CD8-positive, alpha-beta T cell (primary cell): ENCODE measurements at regions of chr2 and their contacts with region 1.

Region 1: GRCh38 chr2:109529532-109530449 is 84.0 kb downstream of the SEPTIN10 start:
- DNase-seq: peak in 1 of 9 experiments; percentile 25
- ATAC-seq: no peak
- H3K4me3 ChIP-seq: no peak overlapping the region
- H3K4me3 Mint-ChIP-seq: no peak overlapping the region
- H3K27ac ChIP-seq: no peak overlapping the region
- H3K27ac Mint-ChIP-seq: no peak overlapping the region
- H3K4me1 ChIP-seq: no peaks in the 10 kb centered on the region
- H3K4me1 Mint-ChIP-seq: no peaks in the 10 kb centered on the region
- H3K27me3 ChIP-seq: no peaks in the 10 kb centered on the region
- H3K27me3 Mint-ChIP-seq: no peaks in the 10 kb centered on the region
- CTCF ChIP-seq: no peak

Region 2: DNA sequence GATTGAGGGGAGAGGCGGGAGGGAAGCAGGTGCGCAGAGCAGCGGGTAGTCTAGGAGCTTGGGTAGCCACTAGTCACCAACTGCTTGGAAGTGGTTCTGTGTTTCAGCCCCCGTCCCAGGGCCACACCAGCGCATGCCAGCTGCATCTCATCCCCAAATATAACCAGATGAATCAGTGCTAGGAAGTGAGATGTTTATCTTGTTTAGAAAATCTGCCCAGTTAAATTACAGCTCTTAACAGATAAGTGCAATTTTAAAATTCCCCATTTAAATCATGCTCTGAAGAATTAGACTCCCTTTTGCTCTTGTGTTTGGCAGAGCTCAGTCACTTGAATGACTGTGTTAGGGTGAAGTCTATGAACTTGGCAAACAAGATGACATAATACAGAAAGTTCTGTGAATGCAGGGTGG is 109.8 kb before region 1 on chr2:
- CTCF ChIA-PET with region 1: no interaction called
- POLR2A ChIA-PET with region 1: no interaction called
- intact Hi-C with region 1: no loop called
- DNase-seq: no peak
- ATAC-seq: no peak
- H3K4me3 ChIP-seq: no peak overlapping the region
- H3K4me3 Mint-ChIP-seq: no peak overlapping the region
- H3K27ac ChIP-seq: no peak overlapping the region
- H3K27ac Mint-ChIP-seq: no peak overlapping the region
- H3K4me1 ChIP-seq: no peaks in the 10 kb centered on the region
- H3K4me1 Mint-ChIP-seq: no peaks in the 10 kb centered on the region
- H3K27me3 ChIP-seq: no peaks in the 10 kb centered on the region
- H3K27me3 Mint-ChIP-seq: no peaks in the 10 kb centered on the region
- CTCF ChIP-seq: no peak

Region 3: GRCh38 chr2:109457794-109458193 is 72.0 kb before region 1 on chr2:
- CTCF ChIA-PET with region 1: no interaction called
- POLR2A ChIA-PET with region 1: no interaction called
- intact Hi-C with region 1: no loop called
- DNase-seq: no peak
- ATAC-seq: no peak
- H3K4me3 ChIP-seq: no peak overlapping the region
- H3K4me3 Mint-ChIP-seq: no peak overlapping the region
- H3K27ac ChIP-seq: no peak overlapping the region
- H3K27ac Mint-ChIP-seq: no peak overlapping the region
- H3K4me1 ChIP-seq: no peaks in the 10 kb centered on the region
- H3K4me1 Mint-ChIP-seq: no peaks in the 10 kb centered on the region
- H3K27me3 ChIP-seq: no peaks in the 10 kb centered on the region
- H3K27me3 Mint-ChIP-seq: no peaks in the 10 kb centered on the region
- CTCF ChIP-seq: no peak

Region 4: DNA sequence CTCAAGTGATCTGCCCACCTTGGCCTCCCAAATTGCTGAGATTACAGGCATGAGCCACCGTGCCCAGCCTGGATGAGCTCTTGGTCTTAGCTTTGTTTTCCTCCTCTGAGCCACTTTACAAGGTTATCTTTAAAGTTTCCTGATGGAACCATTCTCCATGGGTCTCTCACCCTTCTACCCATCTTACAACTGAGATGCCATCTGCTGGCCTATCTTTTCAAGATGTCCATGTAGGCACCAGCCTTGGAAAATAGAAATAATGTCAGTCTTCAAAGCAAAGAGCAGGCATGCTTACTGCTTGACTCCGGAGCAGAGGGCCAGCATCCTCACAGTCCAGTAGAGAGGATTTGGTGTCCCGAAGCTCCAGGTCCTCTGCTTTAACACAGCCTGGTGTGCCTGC is 39.8 kb before region 1 on chr2:
- CTCF ChIA-PET with region 1: no interaction called
- POLR2A ChIA-PET with region 1: no interaction called
- intact Hi-C with region 1: loop called in 1 of 2 experiments (anchors 2 kb)
- DNase-seq: peak in 1 of 9 experiments; percentile 14
- ATAC-seq: no peak
- H3K4me3 ChIP-seq: no peak overlapping the region
- H3K4me3 Mint-ChIP-seq: no peak overlapping the region
- H3K27ac ChIP-seq: no peak overlapping the region
- H3K27ac Mint-ChIP-seq: no peak overlapping the region
- H3K4me1 ChIP-seq: no peaks in the 10 kb centered on the region
- H3K4me1 Mint-ChIP-seq: peaks cover 3% of the 10 kb centered on the region
- H3K27me3 ChIP-seq: no peaks in the 10 kb centered on the region
- H3K27me3 Mint-ChIP-seq: no peaks in the 10 kb centered on the region
- CTCF ChIP-seq: no peak

Region 5: DNA sequence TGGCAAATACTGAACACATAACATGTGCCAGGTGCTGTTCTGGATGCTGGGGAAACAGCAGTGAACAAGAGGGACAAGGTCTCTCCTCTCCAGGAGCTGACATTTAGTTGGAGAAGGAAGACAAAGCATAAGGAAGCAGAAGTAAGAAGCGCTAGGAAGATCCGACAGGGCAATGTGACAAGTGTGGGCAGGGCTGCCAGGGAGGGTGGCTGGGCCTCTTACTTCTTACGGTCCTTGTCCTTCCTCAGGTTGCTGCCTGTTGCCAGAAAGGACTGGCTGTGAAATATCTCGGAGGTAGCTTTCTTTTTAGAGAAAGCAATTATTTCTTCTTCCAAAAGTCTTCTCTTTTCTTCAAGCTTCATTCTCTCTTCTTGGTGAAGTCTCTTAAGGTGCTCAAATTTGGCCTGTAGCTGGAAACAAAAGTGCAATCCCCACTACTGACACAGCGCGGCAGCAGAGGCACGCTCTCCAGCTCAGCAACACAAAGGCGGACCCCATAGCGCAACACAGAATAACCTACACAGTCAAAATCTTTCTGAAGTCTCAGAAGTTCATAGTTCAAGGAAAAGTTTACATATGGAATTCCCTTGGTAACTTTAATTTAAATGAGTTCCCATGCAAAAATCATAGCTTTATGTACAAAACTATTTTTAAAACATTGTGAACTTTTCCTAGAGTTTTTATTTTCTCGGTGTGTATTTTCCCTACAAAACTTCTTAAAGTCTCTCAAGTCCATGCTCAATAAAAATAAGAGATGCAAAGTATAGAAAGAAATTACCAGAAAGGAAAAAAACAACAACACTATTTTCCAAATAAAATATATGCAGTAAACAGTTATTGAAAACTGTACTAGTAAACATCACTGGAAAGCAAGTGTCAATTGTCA is 16.3 kb after region 1 on chr2:
- CTCF ChIA-PET with region 1: interaction called, 15 read pairs
- POLR2A ChIA-PET with region 1: no interaction called
- intact Hi-C with region 1: no loop called
- DNase-seq: peak; percentile 24 to 71 (median 51)
- ATAC-seq: peak; percentile 92
- H3K4me3 ChIP-seq: no peak overlapping the region
- H3K4me3 Mint-ChIP-seq: no peak overlapping the region
- H3K27ac ChIP-seq: no peak overlapping the region
- H3K27ac Mint-ChIP-seq: no peak overlapping the region
- H3K4me1 ChIP-seq: no peaks in the 10 kb centered on the region
- H3K4me1 Mint-ChIP-seq: no peaks in the 10 kb centered on the region
- H3K27me3 ChIP-seq: no peaks in the 10 kb centered on the region
- H3K27me3 Mint-ChIP-seq: peaks cover 12% of the 10 kb centered on the region
- CTCF ChIP-seq: peak; percentile 84

Region 6: DNA sequence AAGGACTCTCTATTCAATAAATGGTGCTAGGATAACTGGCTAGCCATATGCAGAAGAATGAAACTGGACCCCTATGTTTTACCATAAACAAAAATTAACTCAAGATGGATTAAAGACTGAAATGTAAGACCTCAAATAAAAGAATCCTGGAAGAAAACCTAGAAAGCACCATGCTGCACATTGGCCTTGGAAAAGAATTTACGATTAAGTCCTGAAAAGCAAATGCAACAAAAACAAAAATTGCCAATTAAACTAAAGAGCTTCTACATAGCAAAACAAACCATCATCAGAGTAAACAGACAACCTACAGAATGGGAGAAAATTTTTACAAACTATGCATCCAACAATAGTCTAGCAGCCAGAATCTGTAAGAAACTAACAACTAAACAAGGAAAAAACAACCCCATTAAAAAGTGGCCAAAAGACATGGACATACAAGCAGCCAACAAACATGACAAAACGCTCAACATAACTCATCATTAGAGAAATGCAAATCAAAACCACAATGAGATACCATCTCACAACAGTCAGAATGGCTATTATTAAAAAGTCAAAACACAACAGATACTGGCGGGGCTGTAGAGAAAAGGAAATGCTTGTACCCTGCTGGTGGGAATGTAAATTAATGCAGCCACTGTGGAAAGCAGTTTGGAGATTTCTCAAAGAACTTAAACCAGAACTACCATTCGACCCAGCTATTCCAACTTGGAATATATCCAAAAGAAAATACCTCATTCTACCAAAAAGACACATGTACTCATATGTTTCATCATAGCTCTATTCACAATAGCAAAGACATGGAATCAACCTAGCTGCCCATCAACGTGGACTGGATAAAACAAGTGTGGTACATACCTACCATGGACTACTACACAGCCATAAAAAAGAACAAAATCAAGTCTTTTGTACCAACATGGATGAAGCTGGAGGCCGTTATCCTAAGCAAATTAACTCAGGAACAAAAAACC is 53.4 kb after region 1 on chr2:
- CTCF ChIA-PET with region 1: no interaction called
- POLR2A ChIA-PET with region 1: no interaction called
- intact Hi-C with region 1: no loop called
- DNase-seq: no peak
- ATAC-seq: no peak
- H3K4me3 ChIP-seq: no peak overlapping the region
- H3K4me3 Mint-ChIP-seq: no peak overlapping the region
- H3K27ac ChIP-seq: no peak overlapping the region
- H3K27ac Mint-ChIP-seq: no peak overlapping the region
- H3K4me1 ChIP-seq: no peaks in the 10 kb centered on the region
- H3K4me1 Mint-ChIP-seq: no peaks in the 10 kb centered on the region
- H3K27me3 ChIP-seq: peaks cover 0 to 2% of the 10 kb centered on the region in 2 experiments
- H3K27me3 Mint-ChIP-seq: peaks cover 4% of the 10 kb centered on the region
- CTCF ChIP-seq: no peak

Region 7: DNA sequence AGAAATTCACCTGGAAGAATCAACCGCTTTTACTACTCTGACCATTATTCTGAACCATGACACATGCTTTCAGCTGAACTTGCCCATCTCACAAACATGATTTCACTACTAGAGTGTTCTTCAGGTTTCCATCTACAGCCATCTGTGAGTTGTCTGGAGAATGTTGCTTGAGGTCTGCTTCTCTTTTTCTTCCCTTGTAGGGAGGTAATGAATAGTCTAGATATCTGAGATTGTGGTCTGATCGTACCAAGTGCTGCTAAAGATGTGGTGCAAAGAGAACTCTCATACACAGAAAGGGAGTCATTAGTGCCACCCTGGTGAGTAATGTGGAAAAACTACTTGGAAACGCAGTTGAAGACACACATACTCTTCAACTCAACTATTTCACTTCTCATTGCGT is 94.5 kb after region 1 on chr2:
- CTCF ChIA-PET with region 1: no interaction called
- POLR2A ChIA-PET with region 1: no interaction called
- intact Hi-C with region 1: no loop called
- DNase-seq: no peak
- ATAC-seq: no peak
- H3K4me3 ChIP-seq: no peak overlapping the region
- H3K4me3 Mint-ChIP-seq: no peak overlapping the region
- H3K27ac ChIP-seq: no peak overlapping the region
- H3K27ac Mint-ChIP-seq: no peak overlapping the region
- H3K4me1 ChIP-seq: no peaks in the 10 kb centered on the region
- H3K4me1 Mint-ChIP-seq: no peaks in the 10 kb centered on the region
- H3K27me3 ChIP-seq: peaks cover 0 to 3% of the 10 kb centered on the region in 2 experiments
- H3K27me3 Mint-ChIP-seq: peaks cover 38% of the 10 kb centered on the region
- CTCF ChIP-seq: no peak